ENCODE measurements at regions of chr4 and their contacts with region 1.

Region 1: GRCh38 chr4:154416190-154416547 is 75.4 kb downstream of the DCHS2 start:
- DNase-seq: no peak
- H3K4me3 ChIP-seq: peak overlapping the region; percentile 47 to 65
- H3K27ac ChIP-seq: peak overlapping the region in 1 of 2 donors; percentile 3
- H3K4me1 ChIP-seq: no peaks in the 10 kb centered on the region
- H3K27me3 ChIP-seq: no peaks in the 10 kb centered on the region
- CTCF ChIP-seq: no peak

Region 2: GRCh38 chr4:154361450-154361849 is 54.7 kb before region 1 on chr4:
- intact Hi-C with region 1: loop called (anchors 1 kb)
- DNase-seq: no peak
- H3K4me3 ChIP-seq: no peak overlapping the region
- H3K27ac ChIP-seq: no peak overlapping the region
- H3K4me1 ChIP-seq: peaks cover 0 to 10% of the 10 kb centered on the region in 2 donors
- H3K27me3 ChIP-seq: no peaks in the 10 kb centered on the region
- CTCF ChIP-seq: no peak

Region 3: GRCh38 chr4:154569028-154569427 is 152.9 kb after region 1 on chr4:
- intact Hi-C with region 1: no loop called
- DNase-seq: no peak
- H3K4me3 ChIP-seq: no peak overlapping the region
- H3K27ac ChIP-seq: no peak overlapping the region
- H3K4me1 ChIP-seq: no peaks in the 10 kb centered on the region
- H3K27me3 ChIP-seq: no peaks in the 10 kb centered on the region
- CTCF ChIP-seq: no peak

Measured in ascending aorta (tissue), 2 donors.